CD4-positive, alpha-beta memory T cell (primary cell): ENCODE measurements at regions of chr7 and their contacts with region 1.

Region 1: GRCh38 chr7:66493235-66494181 is 135.2 kb upstream of the KCTD7 start:
- DNase-seq: peak; percentile 96 to 98 (median 97)
- H3K4me3 ChIP-seq: peak overlapping the region; percentile 95 to 97
- H3K4me3 Mint-ChIP-seq: peak overlapping the region; percentile 90 to 96 (median 94)
- H3K27ac ChIP-seq: peak overlapping the region; percentile 92
- H3K27ac Mint-ChIP-seq: peak overlapping the region; percentile 99
- H3K4me1 ChIP-seq: peaks cover 8% of the 10 kb centered on the region
- H3K4me1 Mint-ChIP-seq: peaks cover 12 to 26% (median 18%) of the 10 kb centered on the region in 4 donors
- H3K27me3 ChIP-seq: no peaks in the 10 kb centered on the region
- H3K27me3 Mint-ChIP-seq: no peaks in the 10 kb centered on the region

Region 2: DNA sequence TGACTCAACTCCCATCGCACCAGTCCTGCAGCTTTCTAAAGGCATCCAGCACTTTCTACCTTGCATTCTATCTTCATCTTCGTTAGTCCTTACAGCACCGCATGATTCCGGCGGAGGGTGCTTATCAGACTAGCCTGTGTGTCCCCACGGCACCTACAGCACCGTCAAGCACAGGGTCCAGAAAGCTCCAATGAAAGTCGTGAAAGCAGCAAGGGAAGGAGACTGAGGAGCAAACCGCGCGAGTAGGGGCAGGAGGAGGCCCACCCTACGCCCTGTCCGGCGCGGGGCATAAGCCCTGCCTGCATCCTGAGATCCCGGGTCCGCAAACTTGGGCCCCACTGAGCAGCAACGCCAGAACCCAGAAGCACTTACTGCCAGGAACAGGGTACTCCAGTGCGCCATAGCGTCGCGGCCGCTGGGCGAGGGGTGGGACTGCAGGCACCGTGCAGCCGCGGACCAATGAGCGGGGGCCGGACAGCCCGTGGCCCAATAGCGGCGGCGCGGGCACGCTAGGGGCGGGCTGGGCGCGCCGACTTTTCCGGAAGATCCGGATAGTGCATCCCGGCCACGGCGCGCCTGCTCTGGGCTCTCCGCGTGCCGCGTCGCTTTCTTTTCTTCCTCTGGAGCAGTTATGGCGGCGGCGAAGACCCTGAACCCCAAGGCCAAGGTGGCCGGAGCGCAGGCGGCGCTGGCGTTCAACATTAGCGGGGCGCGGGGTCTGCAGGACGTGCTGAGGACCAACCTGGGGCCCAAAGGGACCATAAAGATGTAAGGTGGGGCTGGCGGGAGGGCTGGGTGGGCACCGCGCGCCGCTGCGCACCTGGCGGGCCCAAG is 742.8 kb before region 1 on chr7:
- CTCF ChIA-PET with region 1: no interaction called
- POLR2A ChIA-PET with region 1: interaction called, 5 read pairs
- intact Hi-C with region 1: loop called (anchors 10 kb)
- DNase-seq: peak; percentile 83 to 86 (median 85)
- H3K4me3 ChIP-seq: peak overlapping the region; percentile 91 to 99
- H3K4me3 Mint-ChIP-seq: peak overlapping the region; percentile 93 to 98 (median 96)
- H3K27ac ChIP-seq: peak overlapping the region; percentile 60
- H3K27ac Mint-ChIP-seq: peak overlapping the region; percentile 87 to 97 (median 94)
- H3K4me1 ChIP-seq: peaks cover 24% of the 10 kb centered on the region
- H3K4me1 Mint-ChIP-seq: peaks cover 7 to 45% (median 27%) of the 10 kb centered on the region in 4 donors
- H3K27me3 ChIP-seq: no peaks in the 10 kb centered on the region
- H3K27me3 Mint-ChIP-seq: no peaks in the 10 kb centered on the region

Region 3: DNA sequence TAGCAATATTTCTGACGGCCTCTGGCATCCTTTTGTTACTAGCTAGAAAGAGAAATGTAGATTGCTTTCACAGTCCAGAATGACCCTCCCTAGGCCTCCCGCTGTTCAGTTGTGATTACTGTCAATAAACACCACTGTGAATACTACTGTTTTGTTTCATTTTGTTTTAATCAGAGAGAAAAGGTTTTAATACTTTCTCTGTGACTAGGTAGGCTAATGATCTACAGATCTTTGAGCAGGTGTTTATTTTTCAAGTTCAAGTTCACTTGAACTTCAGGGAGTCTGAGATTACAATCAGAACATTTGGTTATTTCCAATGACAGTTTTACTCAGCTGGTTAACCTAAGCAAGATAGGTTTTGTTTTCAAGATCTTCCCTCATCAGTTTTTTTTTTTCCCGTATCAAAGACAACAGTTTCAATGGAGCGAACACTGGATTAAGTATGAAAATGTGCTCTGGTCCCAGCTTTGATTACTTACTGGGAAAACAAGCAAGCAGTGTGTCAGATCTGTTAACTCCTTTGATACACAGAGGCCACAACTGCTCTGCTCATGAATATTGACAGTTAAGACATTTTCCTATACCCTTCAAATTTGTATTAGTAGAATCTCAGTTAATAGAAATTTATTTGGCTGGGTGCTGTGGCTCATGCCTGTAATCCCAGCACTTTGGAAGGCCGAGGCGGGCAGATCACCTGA is 585.9 kb before region 1 on chr7:
- CTCF ChIA-PET with region 1: no interaction called
- POLR2A ChIA-PET with region 1: no interaction called
- intact Hi-C with region 1: no loop called
- DNase-seq: no peak
- H3K4me3 ChIP-seq: no peak overlapping the region
- H3K4me3 Mint-ChIP-seq: no peak overlapping the region
- H3K27ac ChIP-seq: no peak overlapping the region
- H3K27ac Mint-ChIP-seq: no peak overlapping the region
- H3K4me1 ChIP-seq: no peaks in the 10 kb centered on the region
- H3K4me1 Mint-ChIP-seq: peaks cover 0 to 12% (median 3%) of the 10 kb centered on the region in 4 donors
- H3K27me3 ChIP-seq: no peaks in the 10 kb centered on the region
- H3K27me3 Mint-ChIP-seq: no peaks in the 10 kb centered on the region

Region 4: DNA sequence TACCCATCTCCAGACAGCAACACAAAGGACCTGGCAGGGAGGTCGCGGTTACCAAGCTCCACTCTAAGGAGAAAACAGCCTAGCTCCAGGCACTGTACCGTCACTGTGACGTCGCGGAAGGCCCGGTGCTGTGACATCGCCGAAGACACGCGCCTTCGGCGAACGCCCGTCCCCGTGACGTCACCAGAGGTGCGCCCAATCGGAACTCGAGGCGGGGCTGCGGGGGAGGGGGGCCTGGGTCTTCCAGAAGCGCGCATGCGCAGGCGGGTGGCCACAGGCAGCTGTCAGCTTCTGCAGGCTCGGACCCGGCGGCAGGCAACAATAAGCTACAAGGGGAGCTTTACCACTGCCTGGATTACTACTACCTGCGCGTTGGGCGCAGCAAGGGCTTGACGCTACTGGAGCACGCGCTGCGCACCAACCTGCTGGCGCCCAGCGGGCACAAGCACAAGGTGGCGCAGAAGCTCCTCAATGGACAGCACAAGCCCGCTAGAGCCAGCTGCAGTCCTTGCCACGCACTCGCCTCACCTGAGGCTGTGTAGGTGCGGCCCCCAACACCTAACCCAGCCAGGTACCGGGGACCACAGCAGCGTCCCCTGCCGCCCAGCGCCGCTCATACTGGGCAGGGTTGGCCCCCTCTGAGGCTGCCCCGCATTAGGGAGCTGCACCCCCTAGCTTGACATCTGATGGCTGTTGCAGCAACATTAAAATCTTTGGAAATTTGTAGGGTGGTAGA is 80.0 kb before region 1 on chr7:
- CTCF ChIA-PET with region 1: interaction called, 5 read pairs
- POLR2A ChIA-PET with region 1: interaction called, 11 read pairs
- intact Hi-C with region 1: loop called (anchors 1 kb)
- DNase-seq: peak; percentile 80 to 87 (median 84)
- H3K4me3 ChIP-seq: peak overlapping the region; percentile 63 to 76
- H3K4me3 Mint-ChIP-seq: peak overlapping the region; percentile 77 to 87 (median 80)
- H3K27ac ChIP-seq: peak overlapping the region; percentile 43
- H3K27ac Mint-ChIP-seq: peak overlapping the region; percentile 81 to 96 (median 90)
- H3K4me1 ChIP-seq: peaks cover 13% of the 10 kb centered on the region
- H3K4me1 Mint-ChIP-seq: peaks cover 4 to 19% (median 12%) of the 10 kb centered on the region in 4 donors
- H3K27me3 ChIP-seq: no peaks in the 10 kb centered on the region
- H3K27me3 Mint-ChIP-seq: no peaks in the 10 kb centered on the region

Region 5: DNA sequence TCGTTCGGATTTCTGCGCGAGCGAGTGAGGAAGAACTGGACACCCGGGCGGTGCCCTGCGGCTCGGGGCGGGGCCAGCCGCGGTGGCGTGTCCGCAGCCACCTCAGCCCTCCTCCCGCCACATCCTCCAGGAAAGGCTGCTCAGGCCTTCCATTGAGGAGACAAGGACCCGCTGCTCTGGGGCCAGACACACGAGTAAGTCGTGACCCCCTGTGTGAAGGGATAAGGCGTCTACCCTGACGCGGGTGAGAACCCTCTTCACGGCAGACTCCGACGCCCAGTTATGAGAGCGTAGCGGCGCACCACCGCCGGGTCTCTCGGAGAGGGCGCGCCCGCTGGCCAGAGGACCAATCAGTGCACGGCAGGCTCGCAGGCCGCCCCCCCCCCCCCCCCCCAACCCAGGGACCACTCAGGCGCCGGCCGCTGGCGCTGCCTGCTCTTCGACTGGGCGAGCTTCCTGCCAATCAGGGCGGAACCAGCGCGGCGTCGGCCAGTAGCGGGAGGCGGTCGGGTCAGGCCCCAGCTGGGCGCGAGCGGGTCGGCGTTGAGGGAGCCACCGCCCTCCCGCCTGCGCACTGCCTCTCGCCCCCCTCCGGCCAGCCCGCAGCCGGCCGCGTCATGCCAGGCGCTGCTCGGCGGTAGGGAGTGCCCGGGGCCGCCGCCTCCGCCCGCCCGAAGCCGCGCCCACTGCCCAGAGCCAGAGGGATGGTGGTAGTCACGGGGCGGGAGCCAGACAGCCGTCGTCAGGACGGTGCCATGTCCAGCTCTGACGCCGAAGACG is 135.0 kb after region 1 on chr7 and contains the start of gene KCTD7:
- CTCF ChIA-PET with region 1: no interaction called
- POLR2A ChIA-PET with region 1: interaction called, 8 read pairs
- intact Hi-C with region 1: loop called (anchors 1 kb)
- DNase-seq: peak; percentile 94 to 97 (median 95)
- H3K4me3 ChIP-seq: peak within 1 kb of the TSS; percentile 77 to 89
- H3K4me3 Mint-ChIP-seq: peak within 1 kb of the TSS; percentile 87 to 92 (median 91)
- H3K27ac ChIP-seq: peak within 1 kb of the TSS; percentile 89
- H3K27ac Mint-ChIP-seq: peak within 1 kb of the TSS; percentile 87 to 95 (median 93)
- H3K4me1 ChIP-seq: peaks cover 41% of the 10 kb centered on the region
- H3K4me1 Mint-ChIP-seq: peaks cover 36 to 46% (median 39%) of the 10 kb centered on the region in 4 donors
- H3K27me3 ChIP-seq: no peaks in the 10 kb centered on the region
- H3K27me3 Mint-ChIP-seq: no peaks in the 10 kb centered on the region
- total RNA-seq, gene KCTD7: 57.3 to 63.8 TPM

Region 6: DNA sequence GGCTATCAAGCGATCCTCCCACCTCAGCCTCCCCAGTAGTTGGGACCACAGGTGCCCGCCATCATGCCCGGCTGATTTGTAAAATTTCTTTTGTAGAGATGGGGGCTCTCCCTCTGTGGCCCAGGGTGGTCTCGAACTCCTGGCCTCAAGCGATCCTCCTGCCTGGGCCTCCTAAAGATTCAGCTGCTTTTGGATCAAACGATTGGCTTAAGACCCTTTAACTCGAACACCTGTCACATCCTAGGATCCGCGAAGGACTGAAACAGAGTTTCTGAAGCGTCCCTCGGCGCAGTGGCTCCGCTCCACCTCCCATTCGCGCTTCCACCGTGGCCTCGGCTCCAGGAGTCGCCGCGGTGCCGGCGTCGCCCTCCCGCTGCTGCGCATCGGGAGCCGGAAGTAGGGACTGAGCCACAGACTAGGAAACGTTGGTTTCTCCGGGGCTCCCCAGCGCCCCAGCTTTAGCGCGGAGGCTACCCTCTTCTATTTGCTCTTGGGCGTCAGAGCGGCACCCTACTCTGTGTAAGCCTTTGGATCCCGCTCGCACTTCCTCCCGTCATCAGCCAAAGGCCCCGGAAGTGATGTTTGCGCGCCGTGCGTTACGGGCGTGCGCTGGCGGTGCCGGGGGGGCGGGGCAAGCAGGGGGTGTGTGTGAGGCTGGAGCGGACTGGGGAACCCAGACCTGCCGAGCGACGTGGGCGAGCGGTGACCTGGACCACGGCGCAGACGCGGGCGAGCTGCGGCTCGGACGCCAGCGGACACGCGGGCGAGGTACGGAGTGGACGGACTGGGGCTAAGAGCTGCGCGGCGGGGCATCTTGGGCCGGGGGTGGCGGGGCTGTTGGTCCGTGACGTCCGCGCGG is 188.2 kb after region 1 on chr7:
- CTCF ChIA-PET with region 1: no interaction called
- POLR2A ChIA-PET with region 1: interaction called, 7 read pairs
- intact Hi-C with region 1: loop called (anchors 1 kb)
- DNase-seq: peak; percentile 94 to 97 (median 95)
- H3K4me3 ChIP-seq: peak overlapping the region; percentile 78 to 84
- H3K4me3 Mint-ChIP-seq: peak overlapping the region; percentile 90 to 99 (median 92)
- H3K27ac ChIP-seq: peak overlapping the region; percentile 99
- H3K27ac Mint-ChIP-seq: peak overlapping the region; percentile 95 to 99 (median 98)
- H3K4me1 ChIP-seq: peaks cover 18% of the 10 kb centered on the region
- H3K4me1 Mint-ChIP-seq: peaks cover 14 to 38% (median 26%) of the 10 kb centered on the region in 4 donors
- H3K27me3 ChIP-seq: no peaks in the 10 kb centered on the region
- H3K27me3 Mint-ChIP-seq: no peaks in the 10 kb centered on the region

Region 7: DNA sequence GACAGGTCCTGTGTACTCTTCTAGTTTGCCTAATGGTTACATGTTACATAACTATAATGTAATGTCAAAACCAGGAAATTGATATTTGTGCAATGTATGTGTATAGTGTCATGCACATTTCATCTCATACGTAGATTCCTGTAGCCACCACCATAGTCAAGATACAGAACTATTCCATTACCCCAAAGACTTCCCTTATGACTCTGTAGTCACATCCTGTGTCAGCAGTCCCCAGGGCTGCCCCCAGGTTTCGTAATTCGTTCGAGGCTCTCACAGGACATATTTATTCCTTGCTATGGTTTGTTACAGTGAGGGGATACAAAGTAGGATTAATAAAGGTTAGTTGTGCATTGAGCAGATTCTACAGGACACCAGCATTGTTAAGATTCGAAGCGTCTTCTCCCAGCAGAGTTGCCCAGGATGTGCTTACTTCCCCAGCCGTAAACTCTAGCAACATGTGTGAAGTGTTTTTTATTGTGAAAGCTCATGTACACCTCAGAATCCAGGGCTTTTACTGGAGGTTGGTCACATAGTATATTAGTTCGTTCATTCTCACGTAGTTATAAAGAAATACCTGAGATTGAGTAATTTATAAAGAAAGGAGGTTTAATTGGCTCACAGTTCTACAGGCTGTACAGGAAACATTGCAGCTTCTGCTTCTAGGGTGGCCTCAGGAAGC is 265.6 kb after region 1 on chr7:
- CTCF ChIA-PET with region 1: no interaction called
- POLR2A ChIA-PET with region 1: no interaction called
- intact Hi-C with region 1: no loop called
- DNase-seq: no peak
- H3K4me3 ChIP-seq: no peak overlapping the region
- H3K4me3 Mint-ChIP-seq: peak overlapping the region in 1 of 8 donors; percentile 6
- H3K27ac ChIP-seq: no peak overlapping the region
- H3K27ac Mint-ChIP-seq: peak overlapping the region; percentile 18 to 85 (median 62)
- H3K4me1 ChIP-seq: peaks cover 11% of the 10 kb centered on the region
- H3K4me1 Mint-ChIP-seq: peaks cover 15 to 37% (median 31%) of the 10 kb centered on the region in 4 donors
- H3K27me3 ChIP-seq: no peaks in the 10 kb centered on the region
- H3K27me3 Mint-ChIP-seq: no peaks in the 10 kb centered on the region

Region 8: DNA sequence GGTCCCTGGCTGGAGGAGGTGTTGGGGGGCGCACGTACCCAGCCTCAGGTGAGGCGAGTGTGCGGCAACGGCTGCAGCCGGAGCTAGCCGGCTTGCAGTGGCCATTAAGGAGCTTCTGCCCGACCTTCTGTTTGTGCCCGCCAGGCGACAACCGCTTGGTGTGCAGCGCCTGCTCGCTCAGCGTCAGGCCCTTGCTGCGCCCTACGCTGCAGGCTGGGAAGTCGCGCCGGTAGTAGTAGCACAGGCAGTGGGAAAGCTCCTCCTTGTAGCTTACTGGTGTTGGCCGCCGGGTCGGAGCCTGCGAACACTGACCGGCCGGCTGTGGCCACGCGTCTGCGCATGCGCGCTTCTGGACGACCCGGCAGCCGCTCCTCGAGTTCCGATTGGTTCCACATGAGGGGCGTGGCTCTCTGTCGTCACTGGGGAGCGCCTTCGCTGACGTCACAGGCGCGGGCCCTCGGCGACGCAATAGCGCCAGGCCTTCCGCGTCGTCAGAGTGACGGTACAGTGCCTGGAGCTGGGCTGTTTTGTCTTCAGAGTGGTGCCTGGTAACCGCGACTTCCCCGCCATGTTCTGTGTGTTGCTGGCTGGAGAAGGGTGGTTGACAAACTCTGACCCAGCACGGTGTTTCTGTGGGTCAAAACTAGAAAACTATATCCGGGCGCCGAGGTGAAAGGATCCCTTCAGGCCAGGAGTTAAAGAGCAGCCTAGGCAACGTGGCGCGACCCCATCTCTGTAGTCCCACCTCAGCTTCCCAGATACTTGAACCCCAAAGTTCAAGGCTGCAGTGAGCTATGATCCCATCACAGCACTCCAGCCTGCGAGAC is 351.3 kb after region 1 on chr7:
- CTCF ChIA-PET with region 1: no interaction called
- POLR2A ChIA-PET with region 1: interaction called, 41 read pairs
- intact Hi-C with region 1: loop called (anchors 1 kb)
- DNase-seq: peak; percentile 97 to 100 (median 100)
- H3K4me3 ChIP-seq: peak overlapping the region; percentile 78 to 92
- H3K4me3 Mint-ChIP-seq: peak overlapping the region; percentile 90 to 100 (median 96)
- H3K27ac ChIP-seq: peak overlapping the region; percentile 95
- H3K27ac Mint-ChIP-seq: peak overlapping the region; percentile 98 to 100 (median 100)
- H3K4me1 ChIP-seq: peaks cover 20% of the 10 kb centered on the region
- H3K4me1 Mint-ChIP-seq: peaks cover 8 to 30% (median 19%) of the 10 kb centered on the region in 4 donors
- H3K27me3 ChIP-seq: no peaks in the 10 kb centered on the region
- H3K27me3 Mint-ChIP-seq: peaks cover 3 to 4% of the 10 kb centered on the region in 2 donors